BJ (cell line): ENCODE measurements at regions of chr10 and their contacts with region 1.

Region 1: DNA sequence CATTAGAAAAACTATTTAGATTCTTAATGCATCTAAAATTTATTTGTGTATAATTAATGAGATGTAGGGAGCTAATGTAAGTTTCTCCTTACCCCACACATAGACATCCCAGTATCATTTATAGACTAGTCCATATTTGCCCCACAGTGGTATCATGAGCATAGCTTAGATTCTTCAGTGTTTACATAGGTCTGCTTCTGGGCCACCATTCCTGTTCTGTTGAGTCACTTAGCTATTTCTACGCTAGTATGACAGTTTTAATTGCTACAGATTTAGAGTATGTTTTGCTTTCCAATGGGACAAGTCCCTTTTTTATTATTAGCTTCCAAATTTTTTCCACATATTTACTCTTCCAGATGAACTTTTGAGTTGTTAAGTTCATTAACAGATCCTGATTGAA is 69.4 kb downstream of the MCMBP start:
- DNase-seq: peak; percentile 46
- H3K4me3 ChIP-seq: no peak overlapping the region
- H3K27me3 ChIP-seq: no peaks in the 10 kb centered on the region
- CTCF ChIP-seq: no peak

Region 2: DNA sequence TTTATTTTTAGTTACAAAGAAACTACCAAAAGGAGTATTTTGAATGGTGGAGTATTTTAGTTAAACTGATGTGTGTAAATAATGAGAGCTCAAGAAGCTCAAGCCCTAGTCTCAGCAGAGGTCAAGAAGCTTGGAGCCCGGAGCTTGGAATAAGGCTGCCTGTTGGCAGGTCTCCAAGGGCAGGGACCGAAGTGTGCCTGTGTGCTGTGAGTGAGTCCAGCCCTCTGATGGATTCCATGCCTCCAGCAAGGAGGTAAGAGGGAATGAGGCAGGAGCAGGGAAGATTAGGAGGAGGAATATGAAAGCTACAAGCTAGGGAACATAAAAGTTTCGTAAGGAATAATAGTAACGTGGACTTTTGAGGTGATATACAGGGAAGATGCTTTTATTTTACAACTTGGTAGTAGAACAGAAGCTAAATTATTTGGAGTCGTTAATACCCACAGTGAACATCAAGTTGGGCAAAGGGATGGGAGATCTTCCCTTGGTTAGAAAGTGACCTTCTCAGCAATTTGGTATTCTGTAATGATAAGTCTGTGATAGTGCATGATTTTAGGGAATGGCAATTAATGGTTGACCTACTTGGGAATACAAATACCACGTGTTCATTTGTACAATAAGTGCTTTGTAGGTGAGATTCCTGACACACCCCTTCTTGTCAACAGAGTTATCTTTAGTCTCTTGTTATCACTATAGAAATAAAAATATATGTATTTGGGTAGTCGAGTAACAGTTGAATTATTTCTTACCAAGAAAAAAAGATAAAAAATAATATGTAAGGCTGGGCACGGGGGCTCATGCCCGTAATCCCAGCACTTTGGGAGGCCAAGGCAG is 93.9 kb after region 1 on chr10:
- CTCF ChIA-PET with region 1: no interaction called
- POLR2A ChIA-PET with region 1: interaction called, 15 read pairs
- DNase-seq: no peak
- H3K4me3 ChIP-seq: no peak overlapping the region
- H3K27me3 ChIP-seq: no peaks in the 10 kb centered on the region
- CTCF ChIP-seq: no peak